Mammary epithelial cell (primary cell): ENCODE measurements at regions of chr19 and their contacts with region 1.

Region 1: GRCh38 chr19:34926685-34927375 is at the start of gene ZNF30:
- DNase-seq: peak; percentile 84
- H3K4me3 ChIP-seq: peak within 1 kb of the TSS; percentile 78 to 99 (median 80)
- H3K27ac ChIP-seq: peak within 1 kb of the TSS; percentile 11
- H3K4me1 ChIP-seq: peaks cover 6% of the 10 kb centered on the region
- H3K27me3 ChIP-seq: no peaks in the 10 kb centered on the region
- CTCF ChIP-seq: no peak
- total RNA-seq, gene ZNF30: 3.5 to 3.8 TPM

Region 2: DNA sequence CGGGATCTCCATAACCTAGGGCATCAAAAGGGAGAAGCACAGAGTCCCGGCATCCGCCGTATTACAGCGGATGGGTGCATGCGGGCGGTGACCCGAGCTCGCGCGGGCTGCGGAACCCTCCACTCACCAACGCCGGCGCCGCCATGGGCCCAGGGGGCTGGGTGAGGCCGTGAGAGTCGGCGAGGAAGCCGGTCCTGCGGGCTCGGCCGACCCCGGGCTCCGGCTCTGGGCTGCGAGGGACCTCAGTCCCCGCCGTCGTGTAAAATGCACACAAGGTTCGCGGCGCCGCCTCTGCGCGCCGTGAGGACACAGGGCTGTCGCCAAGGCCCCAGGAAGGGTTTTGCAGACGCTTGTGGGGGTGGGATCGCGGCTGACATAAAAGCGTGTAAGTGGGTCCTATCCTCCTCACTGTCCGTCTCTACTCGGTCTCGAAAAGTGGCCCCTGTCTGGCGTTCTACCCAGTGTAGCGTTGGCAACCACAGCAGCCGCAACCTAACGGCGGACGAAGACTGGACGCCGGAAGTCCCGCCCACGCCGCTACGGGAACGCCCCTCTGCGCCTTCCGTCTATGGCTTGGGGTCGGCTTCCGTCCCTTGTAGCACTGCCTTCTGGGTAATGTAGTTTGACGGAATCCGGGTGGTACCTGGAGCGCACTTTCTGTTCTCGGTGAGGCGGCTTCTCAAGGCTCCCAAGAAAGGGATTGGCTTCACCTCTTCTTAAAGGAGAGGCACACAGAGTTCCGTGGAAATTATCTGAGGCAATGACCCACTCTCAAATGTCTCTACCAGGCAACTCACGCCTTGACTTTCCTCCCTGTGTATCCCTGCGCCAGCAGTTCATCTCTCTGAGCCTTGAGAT is 153.9 kb before region 1 on chr19 and contains the start of gene ZNF599:
- CTCF ChIA-PET with region 1: no interaction called
- dilution Hi-C with region 1: no loop called
- in situ Hi-C with region 1: no loop called
- intact Hi-C with region 1: loop called (anchors 2 kb)
- DNase-seq: peak; percentile 85
- H3K4me3 ChIP-seq: peak within 1 kb of the TSS; percentile 74 to 83 (median 78)
- H3K27ac ChIP-seq: peak within 1 kb of the TSS; percentile 12
- H3K4me1 ChIP-seq: peaks cover 8% of the 10 kb centered on the region
- H3K27me3 ChIP-seq: no peaks in the 10 kb centered on the region
- CTCF ChIP-seq: no peak
- total RNA-seq, gene ZNF599: 4.0 to 5.7 TPM